ENCODE measurements at regions of chr22 and their contacts with region 1.

Region 1: GRCh38 chr22:23970816-23971486 is 3.3 kb downstream of the DDT start:
- DNase-seq: no peak
- H3K4me3 ChIP-seq: no peak overlapping the region
- H3K27ac ChIP-seq: no peak overlapping the region
- H3K4me1 ChIP-seq: no peaks in the 10 kb centered on the region
- H3K27me3 ChIP-seq: no peaks in the 10 kb centered on the region
- CTCF ChIP-seq: no peak
- POLR2A ChIP-seq: no peak

Region 2: GRCh38 chr22:23925020-23925606 is 45.8 kb before region 1 on chr22:
- intact Hi-C with region 1: loop called (anchors 5 kb)
- DNase-seq: no peak
- H3K4me3 ChIP-seq: no peak overlapping the region
- H3K27ac ChIP-seq: no peak overlapping the region
- H3K4me1 ChIP-seq: peaks cover 8% of the 10 kb centered on the region
- H3K27me3 ChIP-seq: no peaks in the 10 kb centered on the region
- CTCF ChIP-seq: no peak
- POLR2A ChIP-seq: no peak